Activated B cell treated with CpG ODN at 0.5 μM for 24 hours (primary cell): ENCODE measurements at regions of chr14 and their contacts with region 1.

Region 1: GRCh38 chr14:81474148-81474492 is 59.5 kb downstream of the SEL1L start:
- DNase-seq: no peak
- ATAC-seq: peak; percentile 53
- H3K4me3 Mint-ChIP-seq: peak overlapping the region; percentile 65
- H3K27ac Mint-ChIP-seq: peak overlapping the region; percentile 83
- H3K4me1 Mint-ChIP-seq: peaks cover 51% of the 10 kb centered on the region
- H3K27me3 Mint-ChIP-seq: no peaks in the 10 kb centered on the region
- CTCF ChIP-seq: no peak

Region 2: DNA sequence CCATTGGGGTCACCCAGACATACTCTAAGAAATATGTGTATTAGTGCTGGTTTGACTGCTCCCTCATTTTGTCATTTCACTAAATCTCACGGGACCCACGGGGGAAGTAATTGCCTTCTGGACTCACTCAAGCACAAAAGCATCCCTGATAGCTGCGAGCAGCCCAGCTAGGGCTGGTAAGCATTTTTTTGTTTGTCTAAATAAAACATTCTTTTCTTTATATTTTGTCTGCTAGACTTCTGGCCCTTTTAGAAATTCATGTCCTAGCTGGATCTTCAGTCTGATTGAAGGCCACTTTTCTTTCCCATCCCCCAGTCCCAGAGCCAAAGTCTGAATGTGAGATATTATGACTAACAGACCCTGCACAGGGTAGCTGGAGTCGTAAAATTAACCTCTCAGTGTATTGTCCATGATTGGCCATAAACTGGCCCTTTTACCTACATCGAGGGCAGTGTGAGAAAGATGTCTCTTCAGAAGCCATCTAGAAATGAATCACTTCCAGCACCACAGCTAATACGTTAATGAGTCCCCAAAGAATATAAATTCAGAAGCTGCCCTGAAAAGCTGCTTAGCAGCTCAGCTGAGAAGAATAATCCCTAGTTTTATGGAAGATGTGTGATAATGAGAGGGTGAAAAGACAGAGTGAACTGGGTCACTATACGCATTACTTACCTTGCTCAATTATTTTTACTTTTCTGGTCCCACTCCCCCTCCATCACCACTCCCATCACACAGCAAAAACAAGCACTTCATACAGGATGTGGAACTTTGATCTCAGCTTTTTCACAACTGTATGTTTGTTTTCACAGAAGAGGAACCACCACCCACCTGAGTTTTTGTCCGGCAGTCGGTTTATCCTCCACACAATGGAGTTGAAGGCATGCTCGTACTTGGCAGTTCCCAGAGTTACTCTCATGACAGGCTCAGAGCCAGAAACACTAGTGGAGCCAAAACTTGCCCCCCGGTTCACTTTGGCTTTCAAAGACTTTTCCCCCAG is 197.7 kb before region 1 on chr14:
- CTCF ChIA-PET with region 1: no interaction called
- POLR2A ChIA-PET with region 1: no interaction called
- intact Hi-C with region 1: no loop called
- DNase-seq: no peak
- ATAC-seq: peak; percentile 58
- H3K4me3 Mint-ChIP-seq: no peak overlapping the region
- H3K27ac Mint-ChIP-seq: no peak overlapping the region
- H3K4me1 Mint-ChIP-seq: peaks cover 17% of the 10 kb centered on the region
- H3K27me3 Mint-ChIP-seq: peaks cover 37% of the 10 kb centered on the region
- CTCF ChIP-seq: no peak

Region 3: DNA sequence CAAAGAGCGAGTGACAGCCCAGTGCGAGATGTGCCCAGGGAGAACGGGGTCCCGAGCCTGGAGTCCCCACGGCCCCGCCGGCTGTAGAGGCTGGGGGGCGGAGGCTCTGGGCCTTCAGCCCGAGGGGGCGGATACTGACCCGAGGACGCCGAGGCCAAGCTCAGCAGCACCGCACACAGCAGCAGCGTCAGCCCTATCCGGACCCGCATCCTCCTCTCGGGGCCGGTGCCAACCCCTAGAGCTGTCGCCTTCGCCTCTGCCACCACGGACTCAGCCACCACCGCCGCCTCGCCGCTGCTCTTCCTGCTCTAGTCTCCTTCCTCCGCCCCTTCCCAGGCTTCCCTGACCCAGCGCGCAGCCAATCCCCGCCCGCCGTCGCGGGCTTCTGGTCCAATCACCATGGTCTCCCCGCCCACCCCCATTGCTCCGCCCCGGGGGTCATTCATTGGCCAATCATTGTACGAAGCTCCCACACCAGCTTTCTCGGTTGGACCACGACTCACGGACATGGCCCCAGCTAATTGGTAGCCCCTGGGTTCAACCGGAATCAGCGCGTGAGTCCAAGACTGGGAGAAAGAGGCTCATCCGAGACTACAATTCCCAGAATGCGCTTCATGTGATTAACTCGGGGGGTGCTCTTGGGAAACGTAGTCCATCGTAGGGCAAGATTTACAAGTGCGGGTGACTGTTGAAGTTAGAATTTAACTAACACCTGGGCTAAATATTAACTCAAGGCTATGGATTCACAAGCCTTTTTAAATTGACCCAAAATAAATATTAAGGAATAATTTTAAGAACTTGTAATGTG is 59.6 kb after region 1 on chr14 and contains the start of gene SEL1L:
- CTCF ChIA-PET with region 1: no interaction called
- POLR2A ChIA-PET with region 1: interaction called, 3 read pairs
- intact Hi-C with region 1: loop called (anchors 2 kb)
- DNase-seq: peak; percentile 99
- ATAC-seq: peak; percentile 96
- H3K4me3 Mint-ChIP-seq: peak within 1 kb of the TSS; percentile 96
- H3K27ac Mint-ChIP-seq: peak within 1 kb of the TSS; percentile 85
- H3K4me1 Mint-ChIP-seq: peaks cover 58% of the 10 kb centered on the region
- H3K27me3 Mint-ChIP-seq: no peaks in the 10 kb centered on the region
- CTCF ChIP-seq: no peak
- total RNA-seq, gene SEL1L: 52.9 and 55.4 TPM in 2 replicates